Colonic mucosa (tissue), 4 donors: ENCODE measurements at regions of chr2 and their contacts with region 1.

Region 1: DNA sequence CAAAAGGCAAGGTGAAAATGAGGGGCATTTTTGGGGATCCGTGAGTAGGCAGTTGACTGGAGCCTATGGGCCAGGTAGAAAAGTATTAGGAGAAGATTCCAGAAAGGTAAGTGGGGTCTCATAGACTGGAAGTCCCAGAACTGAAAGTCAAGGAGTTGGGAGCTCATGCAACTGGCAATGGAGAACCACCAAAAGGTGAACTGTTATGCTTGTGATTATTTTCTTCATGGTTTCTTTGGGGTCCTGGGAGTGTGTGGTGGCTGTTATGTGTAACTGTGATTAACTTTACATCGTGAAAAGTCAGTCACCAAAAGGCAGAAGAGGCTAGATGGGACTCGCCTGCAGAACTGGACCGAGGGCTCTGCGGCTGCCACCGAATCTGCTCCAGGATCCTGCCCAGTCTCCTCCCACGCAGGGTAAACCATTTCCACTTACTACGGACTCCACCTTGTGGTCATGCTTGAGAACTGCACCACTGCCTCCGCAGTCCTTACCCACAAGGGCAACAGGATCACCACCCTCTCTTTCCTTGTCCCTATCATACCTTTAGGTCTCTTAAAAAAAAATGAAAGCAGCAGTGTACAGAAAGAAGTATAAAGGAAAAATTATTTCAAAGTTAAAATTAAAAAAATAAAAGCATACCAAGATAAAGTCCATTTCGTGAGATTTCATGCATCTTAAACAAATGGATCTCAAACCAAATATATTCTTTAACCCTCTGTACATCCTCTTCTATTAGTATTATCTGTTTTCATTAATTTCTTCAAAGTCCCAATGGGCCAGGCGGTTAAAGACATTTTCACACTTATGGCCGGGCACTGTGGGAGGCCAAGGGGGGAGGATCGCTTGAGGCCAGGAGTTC is 15.6 kb upstream of the CEP68 start:
- DNase-seq: peak; percentile 90
- H3K4me3 ChIP-seq: no peak overlapping the region
- H3K27ac ChIP-seq: no peak overlapping the region
- H3K4me1 ChIP-seq: no peaks in the 10 kb centered on the region
- H3K27me3 ChIP-seq: no peaks in the 10 kb centered on the region
- CTCF ChIP-seq: peak; percentile 94

Region 2: GRCh38 chr2:64595397-64596160 is 445.1 kb before region 1 on chr2:
- intact Hi-C with region 1: loop called (anchors 10 kb)
- DNase-seq: peak; percentile 51
- H3K4me3 ChIP-seq: no peak overlapping the region
- H3K27ac ChIP-seq: peak overlapping the region; percentile 32
- H3K4me1 ChIP-seq: peaks cover 4% of the 10 kb centered on the region
- H3K27me3 ChIP-seq: no peaks in the 10 kb centered on the region
- CTCF ChIP-seq: peak; percentile 25

Region 3: DNA sequence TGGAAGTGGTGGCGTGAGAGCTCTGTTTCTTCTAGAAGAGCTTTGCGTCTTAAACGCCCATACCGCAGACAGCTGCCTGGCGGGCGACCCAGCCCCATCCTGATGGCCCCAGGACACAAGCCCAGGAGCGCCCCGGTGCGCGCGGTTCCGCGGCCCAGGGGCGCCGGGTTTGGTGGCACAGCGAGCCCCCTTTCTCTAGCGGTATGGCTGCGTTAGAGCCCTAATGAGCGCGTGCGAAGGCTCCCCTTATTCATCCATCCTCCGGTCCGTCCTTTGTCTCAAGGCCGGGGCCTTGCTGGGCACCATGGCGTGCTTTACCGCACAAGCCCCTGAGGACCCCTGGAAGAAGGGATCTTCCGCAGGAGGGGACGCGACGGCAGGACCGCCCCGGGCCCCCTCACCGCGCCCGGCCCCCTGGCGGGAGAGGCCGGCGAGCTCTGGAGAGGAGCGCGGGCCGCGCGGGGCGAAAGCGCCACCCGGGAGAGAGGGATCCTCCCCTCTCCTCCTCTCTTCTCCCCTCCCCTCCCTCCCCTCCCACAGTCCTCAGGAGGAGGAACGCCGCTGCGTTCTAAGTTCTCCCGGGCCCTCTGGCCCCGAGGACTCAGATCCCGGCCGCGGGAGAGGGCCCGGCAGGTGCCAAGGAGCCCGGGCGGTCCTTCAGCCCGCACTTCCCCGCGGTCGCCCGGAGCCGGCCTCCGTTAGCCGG is 52.1 kb before region 1 on chr2:
- intact Hi-C with region 1: loop called (anchors 5 kb)
- DNase-seq: peak; percentile 76
- H3K4me3 ChIP-seq: peak overlapping the region; percentile 90
- H3K27ac ChIP-seq: peak overlapping the region; percentile 97
- H3K4me1 ChIP-seq: peaks cover 8% of the 10 kb centered on the region
- H3K27me3 ChIP-seq: no peaks in the 10 kb centered on the region
- CTCF ChIP-seq: no peak

Region 4: DNA sequence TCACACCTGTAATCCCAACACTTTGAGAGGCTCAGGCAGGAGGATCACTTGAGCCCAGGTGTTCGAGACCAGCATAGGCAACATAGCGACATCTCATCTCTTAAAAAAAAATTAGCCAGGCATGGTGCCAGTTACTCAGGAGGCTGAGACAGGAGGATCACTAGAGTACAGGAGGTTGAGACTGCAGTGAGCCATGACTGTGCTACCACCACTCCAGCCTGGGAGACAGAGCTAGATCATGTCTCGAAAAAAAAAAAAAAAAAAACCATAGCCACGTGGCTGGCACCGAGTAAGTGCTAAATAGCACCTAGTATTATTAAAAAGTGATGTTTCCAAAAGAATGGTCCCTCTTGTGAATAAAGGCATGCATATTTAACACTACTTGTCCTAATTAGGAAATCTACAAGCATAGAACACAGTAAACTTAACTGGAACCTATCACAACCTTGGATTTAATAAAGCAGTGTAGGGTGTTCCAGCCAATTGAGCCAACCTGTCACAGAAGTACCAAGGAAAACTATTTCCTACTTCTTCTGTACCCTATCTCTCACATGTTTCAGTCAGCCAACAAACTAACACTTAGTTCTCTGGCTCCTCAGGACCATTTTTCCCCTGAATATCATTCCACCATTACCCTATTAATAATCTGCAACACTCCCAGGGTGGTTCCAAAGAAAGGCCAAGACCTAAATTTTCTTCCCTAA is 80.5 kb after region 1 on chr2:
- intact Hi-C with region 1: no loop called
- DNase-seq: no peak
- H3K4me3 ChIP-seq: no peak overlapping the region
- H3K27ac ChIP-seq: no peak overlapping the region
- H3K4me1 ChIP-seq: no peaks in the 10 kb centered on the region
- H3K27me3 ChIP-seq: no peaks in the 10 kb centered on the region
- CTCF ChIP-seq: no peak